ENCODE measurements at regions of chr20 and their contacts with region 1.

Region 1: DNA sequence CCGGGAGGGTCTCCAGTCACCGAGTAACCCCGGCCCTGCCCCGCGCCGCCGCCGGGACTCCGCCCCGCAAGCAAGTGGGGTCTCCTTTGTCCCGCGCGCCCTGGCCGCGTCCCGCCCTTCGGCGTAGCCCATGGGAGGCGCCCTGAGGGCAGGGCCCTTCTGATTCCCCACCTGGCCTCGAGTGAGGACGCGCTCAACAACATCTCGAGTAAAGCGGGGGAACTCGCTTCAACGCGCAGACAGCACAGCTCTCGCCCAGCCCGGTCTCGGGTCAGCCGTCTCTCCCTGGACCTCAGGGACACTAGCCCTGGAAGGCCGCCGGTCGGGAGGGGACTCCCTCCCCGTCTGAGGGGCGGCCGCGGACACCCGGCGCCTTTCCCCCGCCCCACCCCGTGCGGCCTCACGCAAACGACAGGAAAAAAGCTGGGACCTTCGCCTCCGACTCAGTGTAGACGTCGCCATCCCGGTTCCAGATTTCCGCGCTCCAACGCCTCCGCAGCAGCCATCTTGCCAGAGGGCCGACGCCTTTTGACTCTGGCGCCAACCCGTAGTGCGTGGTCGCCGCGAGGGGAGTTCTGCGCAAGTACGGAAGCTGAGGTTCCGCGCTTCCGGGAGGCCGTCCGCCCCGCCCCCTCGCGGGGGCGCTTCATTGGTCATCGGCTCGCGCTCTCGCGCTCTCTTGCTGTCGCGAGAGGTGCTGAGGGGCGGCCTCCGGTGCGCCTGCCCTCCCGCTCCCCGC is 412 bp upstream of the GID8 start:
- DNase-seq: peak; percentile 99
- H3K4me3 Mint-ChIP-seq: peak overlapping the region; percentile 97
- H3K27ac Mint-ChIP-seq: peak overlapping the region; percentile 99
- H3K4me1 Mint-ChIP-seq: peaks cover 24% of the 10 kb centered on the region
- H3K27me3 Mint-ChIP-seq: no peaks in the 10 kb centered on the region

Region 2: GRCh38 chr20:62861726-62862336 is 75.7 kb before region 1 on chr20 and contains the start of gene TCFL5:
- intact Hi-C with region 1: loop called (anchors 1 kb)
- DNase-seq: peak; percentile 98
- H3K4me3 Mint-ChIP-seq: peak within 1 kb of the TSS; percentile 64
- H3K27ac Mint-ChIP-seq: peak within 1 kb of the TSS; percentile 42
- H3K4me1 Mint-ChIP-seq: peaks cover 10% of the 10 kb centered on the region
- H3K27me3 Mint-ChIP-seq: peaks cover 24% of the 10 kb centered on the region
- total RNA-seq, gene TCFL5: 5.8 and 6.2 TPM in 2 replicates

Region 3: DNA sequence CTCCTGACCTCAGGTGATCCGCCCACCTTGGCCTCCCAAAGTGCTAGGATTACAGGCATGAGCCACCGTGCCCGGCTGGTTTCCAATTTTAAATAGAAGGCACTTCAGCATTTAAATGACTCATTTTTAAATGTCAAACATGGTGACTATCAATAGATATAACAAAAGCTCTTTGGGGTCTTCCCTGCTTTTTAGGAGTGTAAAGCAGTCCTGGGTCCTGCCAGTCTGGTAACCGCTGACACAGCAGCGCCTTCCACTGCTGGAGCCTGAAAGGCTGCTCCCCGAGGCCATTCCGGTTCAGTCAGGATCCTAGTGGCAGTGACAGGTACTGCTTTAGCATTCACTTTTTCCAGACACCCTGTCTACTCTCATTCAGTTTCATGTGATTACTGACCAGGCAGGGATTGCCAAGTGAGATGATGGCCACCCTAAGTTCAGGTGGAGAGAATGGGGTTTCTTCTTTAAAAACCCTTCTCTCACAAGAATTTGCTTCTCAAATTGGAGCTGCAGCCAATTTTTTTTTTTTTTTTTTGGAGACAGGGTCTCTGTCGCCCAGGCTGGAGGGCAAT is 16.3 kb before region 1 on chr20:
- intact Hi-C with region 1: loop called (anchors 1 kb)
- DNase-seq: peak; percentile 89
- H3K4me3 Mint-ChIP-seq: peak overlapping the region; percentile 55
- H3K27ac Mint-ChIP-seq: peak overlapping the region; percentile 89
- H3K4me1 Mint-ChIP-seq: peaks cover 62% of the 10 kb centered on the region
- H3K27me3 Mint-ChIP-seq: no peaks in the 10 kb centered on the region

Region 4: GRCh38 chr20:62953839-62954703 is 16.5 kb after region 1 on chr20:
- intact Hi-C with region 1: loop called (anchors 2 kb)
- DNase-seq: peak; percentile 92
- H3K4me3 Mint-ChIP-seq: peak overlapping the region; percentile 82
- H3K27ac Mint-ChIP-seq: peak overlapping the region; percentile 89
- H3K4me1 Mint-ChIP-seq: peaks cover 18% of the 10 kb centered on the region
- H3K27me3 Mint-ChIP-seq: no peaks in the 10 kb centered on the region

Region 5: DNA sequence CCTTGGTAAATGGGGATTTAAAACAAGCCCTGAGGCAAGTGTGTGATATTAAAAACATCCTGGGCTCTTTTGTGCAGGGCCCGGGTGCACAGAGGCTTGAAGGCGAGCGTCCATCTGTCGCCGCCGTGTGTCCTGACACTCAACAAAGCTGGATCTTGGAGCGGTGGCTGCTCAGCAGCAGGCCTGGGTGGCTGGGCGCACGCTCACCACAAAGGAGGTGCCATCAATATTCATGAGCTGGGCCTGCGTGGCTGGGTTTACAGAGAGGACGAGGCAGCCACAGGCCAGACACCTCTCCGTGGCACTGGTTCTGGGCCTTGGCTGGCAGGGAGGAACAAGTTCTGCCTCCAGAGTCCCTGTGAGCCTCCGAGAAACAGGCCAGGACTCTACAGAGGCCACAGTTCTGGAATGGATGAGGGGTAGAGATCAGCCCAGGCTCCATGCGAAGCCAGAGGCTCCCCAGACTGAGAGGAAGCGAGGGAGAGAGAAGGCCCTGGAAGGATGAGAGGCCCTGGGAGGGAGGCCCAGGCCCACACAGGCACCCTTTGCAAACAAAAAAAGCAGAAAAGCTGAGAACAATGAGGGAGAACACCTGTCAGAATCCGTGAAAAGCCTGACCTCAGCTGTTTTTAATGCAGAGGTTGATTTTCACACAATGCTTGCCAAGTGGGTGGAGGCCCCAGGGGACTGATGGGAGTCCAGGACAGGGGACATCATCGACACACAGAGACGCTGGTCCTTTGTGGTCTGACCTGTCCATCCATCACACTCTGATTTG is 47.3 kb after region 1 on chr20:
- intact Hi-C with region 1: no loop called
- DNase-seq: no peak
- H3K4me3 Mint-ChIP-seq: no peak overlapping the region
- H3K27ac Mint-ChIP-seq: no peak overlapping the region
- H3K4me1 Mint-ChIP-seq: peaks cover 8% of the 10 kb centered on the region
- H3K27me3 Mint-ChIP-seq: peaks cover 29% of the 10 kb centered on the region

Region 6: GRCh38 chr20:63216041-63216848 is 278.7 kb after region 1 on chr20 and contains the start of gene YTHDF1:
- intact Hi-C with region 1: loop called (anchors 5 kb)
- DNase-seq: peak; percentile 99
- H3K4me3 Mint-ChIP-seq: peak within 1 kb of the TSS; percentile 99
- H3K27ac Mint-ChIP-seq: peak within 1 kb of the TSS; percentile 96
- H3K4me1 Mint-ChIP-seq: peaks cover 31% of the 10 kb centered on the region
- H3K27me3 Mint-ChIP-seq: peaks cover 2% of the 10 kb centered on the region
- total RNA-seq, gene YTHDF1: 44.5 and 48.6 TPM in 2 replicates

Region 7: GRCh38 chr20:63554361-63555278 is 617.1 kb after region 1 on chr20:
- intact Hi-C with region 1: no loop called
- DNase-seq: no peak
- H3K4me3 Mint-ChIP-seq: peak overlapping the region; percentile 77
- H3K27ac Mint-ChIP-seq: no peak overlapping the region
- H3K4me1 Mint-ChIP-seq: peaks cover 12% of the 10 kb centered on the region
- H3K27me3 Mint-ChIP-seq: peaks cover 9% of the 10 kb centered on the region

Region 8: DNA sequence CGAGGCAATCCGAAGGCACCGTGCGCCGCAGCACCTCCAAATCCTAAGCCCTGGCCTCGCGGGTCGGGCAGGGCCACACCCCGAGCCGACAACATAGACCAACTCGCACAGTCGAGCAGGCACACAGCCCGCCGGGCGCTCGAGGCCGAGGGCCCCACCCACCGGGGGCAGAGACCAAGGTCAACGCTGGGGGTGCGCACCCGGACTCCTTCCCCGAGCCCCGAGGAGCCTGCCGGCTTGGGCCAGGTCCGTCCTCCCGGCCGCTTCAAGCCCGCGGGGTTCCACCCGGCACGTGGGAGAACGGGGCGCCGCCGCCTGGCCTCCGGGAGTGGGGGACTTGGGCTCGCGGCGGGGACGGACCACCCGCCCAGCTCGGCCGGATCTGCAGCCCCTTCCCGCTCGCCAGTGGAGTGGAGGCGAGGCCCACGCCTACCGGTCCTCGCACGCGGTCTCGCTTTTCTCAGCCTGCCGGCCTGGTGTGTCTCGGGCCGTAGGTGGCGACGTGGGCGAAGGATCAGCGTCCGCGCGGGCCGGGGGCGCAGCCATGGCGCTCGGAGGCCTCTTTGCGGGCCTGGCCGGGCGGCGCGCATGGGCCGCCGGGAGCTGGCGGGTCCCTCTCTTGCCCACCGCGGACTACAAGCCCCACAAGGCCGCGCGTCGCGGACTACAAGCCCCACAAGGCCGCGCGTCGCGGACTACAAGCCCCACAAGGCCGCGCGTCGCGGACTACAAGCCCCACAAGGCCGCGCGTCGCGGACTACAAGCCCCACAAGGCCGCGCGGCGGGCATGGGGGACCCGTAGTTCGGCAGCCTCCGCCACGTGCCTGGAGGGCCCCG is 1018.5 kb after region 1 on chr20 and contains the start of gene UCKL1:
- intact Hi-C with region 1: loop called (anchors 5 kb)
- DNase-seq: peak; percentile 97
- H3K4me3 Mint-ChIP-seq: peak within 1 kb of the TSS; percentile 85
- H3K27ac Mint-ChIP-seq: peak within 1 kb of the TSS; percentile 88
- H3K4me1 Mint-ChIP-seq: peaks cover 28% of the 10 kb centered on the region
- H3K27me3 Mint-ChIP-seq: no peaks in the 10 kb centered on the region
- total RNA-seq, gene UCKL1: 48.1 and 49.5 TPM in 2 replicates

Measured in activated CD4-positive, alpha-beta T cell treated with anti-CD3 and anti-CD28 coated beads, Interleukin-2, amount 10 ng/mL, durations not matched to agents 24 days and 14 days (primary cell).